K562 (cell line): ENCODE measurements at regions of chr4 and their contacts with region 1.

Region 1: GRCh38 chr4:103204111-103204510 is 6.0 kb upstream of the CENPE start:
- DNase-seq: peak in 1 of 4 experiments; percentile 15
- ATAC-seq: peak; percentile 54; the same call in 2 of the 3 replicates
- H3K4me3 ChIP-seq: no peak overlapping the region
- H3K27ac ChIP-seq: no peak overlapping the region
- H3K4me1 ChIP-seq: no peaks in the 10 kb centered on the region
- H3K27me3 ChIP-seq: no peaks in the 10 kb centered on the region
- CTCF ChIP-seq: peak; percentile 19 to 65 (median 30); a peak in 4 of 6 replicates
- EP300 ChIP-seq: no peak
- POLR2A ChIP-seq: no peak
- RAD21 ChIP-seq: peak; percentile 60 to 66

Region 2: DNA sequence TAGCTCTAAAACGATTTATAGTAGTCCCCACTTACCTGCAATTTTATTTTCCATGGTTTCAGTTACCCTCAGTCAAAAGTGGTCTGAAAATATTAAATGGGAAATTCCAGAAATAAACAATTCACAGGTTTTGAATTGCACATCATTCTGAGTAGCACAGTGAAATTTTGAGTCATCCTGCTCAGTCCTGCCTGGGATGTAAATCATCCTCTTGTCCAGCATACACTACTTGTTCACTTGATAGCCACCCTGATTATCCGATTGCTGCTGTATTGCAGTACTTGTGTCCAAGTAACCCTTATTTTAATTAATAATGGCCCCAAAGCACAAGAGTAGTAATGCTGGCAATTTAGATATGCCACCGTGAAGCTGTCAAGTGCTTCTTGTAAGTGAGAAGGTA is 81.0 kb before region 1 on chr4:
- CTCF ChIA-PET with region 1: no interaction called
- POLR2A ChIA-PET with region 1: no interaction called
- in situ Hi-C with region 1: no loop called
- intact Hi-C with region 1: no loop called
- DNase-seq: no peak
- ATAC-seq: no peak
- H3K4me3 ChIP-seq: no peak overlapping the region
- H3K27ac ChIP-seq: no peak overlapping the region
- H3K4me1 ChIP-seq: no peaks in the 10 kb centered on the region
- H3K27me3 ChIP-seq: no peaks in the 10 kb centered on the region
- CTCF ChIP-seq: no peak
- EP300 ChIP-seq: no peak
- POLR2A ChIP-seq: no peak
- RAD21 ChIP-seq: no peak

Region 3: GRCh38 chr4:103478729-103479128 is 274.6 kb after region 1 on chr4:
- CTCF ChIA-PET with region 1: no interaction called
- POLR2A ChIA-PET with region 1: no interaction called
- in situ Hi-C with region 1: no loop called
- intact Hi-C with region 1: loop called (anchors 10 kb)
- DNase-seq: no peak
- ATAC-seq: no peak
- H3K4me3 ChIP-seq: no peak overlapping the region
- H3K27ac ChIP-seq: no peak overlapping the region
- H3K4me1 ChIP-seq: no peaks in the 10 kb centered on the region
- H3K27me3 ChIP-seq: no peaks in the 10 kb centered on the region
- CTCF ChIP-seq: no peak
- EP300 ChIP-seq: no peak
- POLR2A ChIP-seq: no peak
- RAD21 ChIP-seq: no peak

Region 4: GRCh38 chr4:103786014-103786413 is 581.9 kb after region 1 on chr4:
- CTCF ChIA-PET with region 1: interaction called, 5 read pairs
- POLR2A ChIA-PET with region 1: no interaction called
- in situ Hi-C with region 1: loop called (anchors 25 kb)
- intact Hi-C with region 1: loop called (anchors 2 kb)
- DNase-seq: peak; percentile 12 to 57 (median 12)
- ATAC-seq: peak; percentile 71
- H3K4me3 ChIP-seq: no peak overlapping the region
- H3K27ac ChIP-seq: no peak overlapping the region
- H3K4me1 ChIP-seq: no peaks in the 10 kb centered on the region
- H3K27me3 ChIP-seq: no peaks in the 10 kb centered on the region
- CTCF ChIP-seq: peak; percentile 22 to 52 (median 47); a peak in 5 of 6 replicates
- EP300 ChIP-seq: no peak
- POLR2A ChIP-seq: no peak
- RAD21 ChIP-seq: peak; percentile 58 to 69

Region 5: DNA sequence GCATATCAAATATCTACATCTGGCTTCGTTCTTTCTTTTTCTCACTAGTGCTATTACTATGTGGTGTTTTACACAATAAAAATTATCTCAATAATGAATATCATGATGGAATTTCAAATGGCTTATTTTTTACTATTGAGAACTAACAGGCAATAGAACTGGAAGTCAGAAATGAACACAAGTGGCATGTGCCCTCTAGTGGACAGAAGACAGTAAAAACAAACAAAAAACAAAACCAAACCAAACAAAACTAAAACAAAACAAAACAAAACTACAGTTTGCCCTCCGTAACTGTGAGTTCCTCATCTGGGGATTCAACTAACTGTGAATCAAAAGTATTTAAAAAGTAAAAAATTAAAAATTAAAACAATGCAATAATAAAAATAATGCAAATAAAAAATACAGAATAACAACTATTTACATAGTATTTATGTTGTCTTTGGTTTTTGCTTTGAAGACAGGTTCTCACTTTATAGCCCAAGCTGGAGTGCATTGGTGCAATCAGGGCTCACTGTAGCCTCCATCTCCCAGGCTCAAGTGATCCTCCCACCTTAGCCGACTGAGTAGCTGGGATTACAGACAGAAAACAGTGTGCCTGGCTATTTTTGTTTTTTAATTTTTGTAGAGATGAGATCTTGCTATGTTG is 711.2 kb after region 1 on chr4:
- CTCF ChIA-PET with region 1: no interaction called
- POLR2A ChIA-PET with region 1: no interaction called
- in situ Hi-C with region 1: no loop called
- intact Hi-C with region 1: loop called (anchors 5 kb)
- DNase-seq: peak in 3 of 4 experiments; percentile 8 to 9 (median 8)
- ATAC-seq: no peak
- H3K4me3 ChIP-seq: no peak overlapping the region
- H3K27ac ChIP-seq: no peak overlapping the region
- H3K4me1 ChIP-seq: no peaks in the 10 kb centered on the region
- H3K27me3 ChIP-seq: no peaks in the 10 kb centered on the region
- CTCF ChIP-seq: peak; percentile 6 to 46 (median 15); a peak in 3 of 6 replicates
- EP300 ChIP-seq: no peak
- POLR2A ChIP-seq: no peak
- RAD21 ChIP-seq: peak; percentile 33 to 48

Region 6: DNA sequence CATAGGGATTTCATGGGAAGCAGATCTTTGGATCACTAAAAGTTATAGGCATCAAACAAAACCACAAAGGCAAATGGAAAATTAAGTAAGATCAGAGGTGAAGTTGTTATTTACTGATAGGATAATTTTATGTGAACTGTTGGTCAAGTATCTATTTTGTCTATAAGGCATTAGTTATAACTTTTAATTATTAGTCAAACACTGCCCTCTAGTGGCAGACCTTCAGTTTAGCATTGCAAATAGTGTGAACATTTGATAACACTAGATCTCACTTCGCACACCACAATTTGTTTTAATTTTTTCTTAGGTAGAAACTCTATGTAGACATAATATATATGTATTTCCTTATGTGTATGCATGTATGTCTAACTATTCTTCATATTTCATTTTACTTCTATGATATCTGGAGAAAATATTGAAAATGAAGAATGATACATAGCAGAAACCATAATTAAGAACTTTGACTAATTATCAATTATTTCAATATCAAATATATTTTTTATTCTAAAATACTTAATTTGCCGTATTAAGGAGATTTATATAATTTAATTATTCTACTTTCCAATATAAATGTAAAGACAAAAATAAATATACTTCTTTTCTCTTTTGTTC is 730.2 kb after region 1 on chr4:
- CTCF ChIA-PET with region 1: interaction called, 4 read pairs
- POLR2A ChIA-PET with region 1: no interaction called
- in situ Hi-C with region 1: loop called (anchors 25 kb)
- intact Hi-C with region 1: loop called (anchors 5 kb)
- DNase-seq: peak; percentile 14 to 61 (median 26)
- ATAC-seq: peak; percentile 73
- H3K4me3 ChIP-seq: no peak overlapping the region
- H3K27ac ChIP-seq: no peak overlapping the region
- H3K4me1 ChIP-seq: no peaks in the 10 kb centered on the region; a peak in 1 of 5 replicates
- H3K27me3 ChIP-seq: no peaks in the 10 kb centered on the region
- CTCF ChIP-seq: peak; percentile 18 to 61 (median 46); a peak in 2 of 6 replicates
- EP300 ChIP-seq: no peak
- POLR2A ChIP-seq: no peak
- RAD21 ChIP-seq: peak; percentile 51 to 56